GM12878 (cell line): ENCODE measurements at regions of chr17 and their contacts with region 1.

Region 1: DNA sequence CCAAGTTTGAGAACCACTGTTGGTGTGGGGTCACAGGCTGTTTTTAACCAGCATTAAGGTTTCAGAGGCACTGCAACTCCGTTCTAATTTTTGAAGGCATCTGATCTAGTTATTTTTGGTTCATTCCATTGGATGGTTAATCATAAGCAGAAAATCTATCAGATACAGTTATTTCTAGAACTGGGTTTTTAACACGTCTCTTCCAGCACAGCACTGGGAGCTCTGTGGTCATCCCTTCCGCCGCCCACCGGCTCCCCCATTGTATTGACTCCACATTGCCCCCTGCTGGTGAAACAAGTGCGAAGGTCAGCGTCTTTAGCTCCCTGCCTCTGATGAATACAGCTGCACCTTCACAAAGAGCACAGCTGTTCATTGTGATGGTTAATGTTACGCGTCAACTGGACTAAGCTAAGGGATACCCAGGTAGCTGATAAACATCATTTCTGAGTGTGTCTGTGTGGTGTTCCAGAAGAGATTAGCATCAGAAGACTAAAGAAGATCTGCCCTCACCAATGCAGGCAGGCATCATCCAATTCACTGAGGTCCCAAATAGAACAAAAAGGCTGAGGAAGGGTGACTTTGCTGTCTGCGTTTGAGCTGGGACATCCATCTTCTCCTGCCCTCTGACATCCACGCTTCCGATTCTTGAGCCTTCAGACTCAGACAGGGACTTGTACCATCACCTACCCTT is 8.5 kb downstream of the CCL18 start:
- DNase-seq: peak; percentile 69
- ATAC-seq: peak; percentile 90
- H3K4me3 ChIP-seq: no peak overlapping the region
- H3K27ac ChIP-seq: no peak overlapping the region
- H3K4me1 ChIP-seq: peaks cover 11% of the 10 kb centered on the region
- H3K27me3 ChIP-seq: no peaks in the 10 kb centered on the region
- CTCF ChIP-seq: peak; percentile 69 to 82 (median 81)
- EP300 ChIP-seq: peak; percentile 82 to 94; a peak in 3 of 4 replicates
- POLR2A ChIP-seq: no peak
- RAD21 ChIP-seq: peak; percentile 73

Region 2: GRCh38 chr17:35460354-35460851 is 612.2 kb before region 1 on chr17:
- CTCF ChIA-PET with region 1: no interaction called
- POLR2A ChIA-PET with region 1: no interaction called
- RAD21 ChIA-PET with region 1: no interaction called
- SMC1A ChIA-PET with region 1: no interaction called
- in situ Hi-C with region 1: no loop called
- intact Hi-C with region 1: no loop called
- DNase-seq: peak; percentile 39
- ATAC-seq: peak; percentile 98
- H3K4me3 ChIP-seq: peak overlapping the region; percentile 54; the same call in 1 of the 2 replicates
- H3K27ac ChIP-seq: peak overlapping the region; percentile 24; the same call in 1 of the 2 replicates
- H3K4me1 ChIP-seq: no peaks in the 10 kb centered on the region
- H3K27me3 ChIP-seq: no peaks in the 10 kb centered on the region
- CTCF ChIP-seq: no peak
- EP300 ChIP-seq: no peak
- POLR2A ChIP-seq: peak; percentile 64
- RAD21 ChIP-seq: no peak

Region 3: GRCh38 chr17:35969558-35970380 is 102.8 kb before region 1 on chr17:
- CTCF ChIA-PET with region 1: interaction called, 392 read pairs
- POLR2A ChIA-PET with region 1: interaction called, 3 read pairs
- RAD21 ChIA-PET with region 1: interaction called, 89 read pairs
- SMC1A ChIA-PET with region 1: interaction called, 341 read pairs
- in situ Hi-C with region 1: loop called (anchors 5 kb)
- intact Hi-C with region 1: no loop called
- DNase-seq: peak; percentile 45
- ATAC-seq: peak; percentile 92
- H3K4me3 ChIP-seq: no peak overlapping the region
- H3K27ac ChIP-seq: no peak overlapping the region
- H3K4me1 ChIP-seq: no peaks in the 10 kb centered on the region
- H3K27me3 ChIP-seq: no peaks in the 10 kb centered on the region
- CTCF ChIP-seq: peak; percentile 77 to 92 (median 86); a peak in 5 of 6 replicates
- EP300 ChIP-seq: no peak
- POLR2A ChIP-seq: no peak
- RAD21 ChIP-seq: peak; percentile 95

Region 4: GRCh38 chr17:36008998-36009665 is 63.4 kb before region 1 on chr17:
- CTCF ChIA-PET with region 1: interaction called, 16 read pairs
- POLR2A ChIA-PET with region 1: no interaction called
- RAD21 ChIA-PET with region 1: interaction called, 3 read pairs
- SMC1A ChIA-PET with region 1: interaction called, 13 read pairs
- in situ Hi-C with region 1: no loop called
- intact Hi-C with region 1: no loop called
- DNase-seq: no peak
- ATAC-seq: peak; percentile 77
- H3K4me3 ChIP-seq: no peak overlapping the region; the same call in 1 of the 2 replicates
- H3K27ac ChIP-seq: no peak overlapping the region
- H3K4me1 ChIP-seq: no peaks in the 10 kb centered on the region
- H3K27me3 ChIP-seq: no peaks in the 10 kb centered on the region
- CTCF ChIP-seq: peak; percentile 4 to 51 (median 47); a peak in 4 of 6 replicates
- EP300 ChIP-seq: no peak
- POLR2A ChIP-seq: no peak
- RAD21 ChIP-seq: no peak

Region 5: GRCh38 chr17:36055171-36055570 is 17.4 kb before region 1 on chr17:
- CTCF ChIA-PET with region 1: interaction called, 10 read pairs
- POLR2A ChIA-PET with region 1: interaction called, 3 read pairs
- RAD21 ChIA-PET with region 1: interaction called, 4 read pairs
- SMC1A ChIA-PET with region 1: interaction called, 6 read pairs
- in situ Hi-C with region 1: no loop called
- intact Hi-C with region 1: no loop called
- DNase-seq: no peak
- ATAC-seq: no peak
- H3K4me3 ChIP-seq: no peak overlapping the region
- H3K27ac ChIP-seq: no peak overlapping the region
- H3K4me1 ChIP-seq: no peaks in the 10 kb centered on the region
- H3K27me3 ChIP-seq: no peaks in the 10 kb centered on the region
- CTCF ChIP-seq: no peak
- EP300 ChIP-seq: no peak
- POLR2A ChIP-seq: no peak
- RAD21 ChIP-seq: no peak

Region 6: GRCh38 chr17:36107660-36108059 is 35.1 kb after region 1 on chr17:
- CTCF ChIA-PET with region 1: interaction called, 25 read pairs
- POLR2A ChIA-PET with region 1: no interaction called
- RAD21 ChIA-PET with region 1: interaction called, 6 read pairs
- SMC1A ChIA-PET with region 1: interaction called, 17 read pairs
- in situ Hi-C with region 1: no loop called
- intact Hi-C with region 1: no loop called
- DNase-seq: no peak
- ATAC-seq: no peak
- H3K4me3 ChIP-seq: no peak overlapping the region
- H3K27ac ChIP-seq: no peak overlapping the region
- H3K4me1 ChIP-seq: peaks cover 13% of the 10 kb centered on the region
- H3K27me3 ChIP-seq: no peaks in the 10 kb centered on the region
- CTCF ChIP-seq: no peak
- EP300 ChIP-seq: no peak
- POLR2A ChIP-seq: no peak
- RAD21 ChIP-seq: no peak

Region 7: DNA sequence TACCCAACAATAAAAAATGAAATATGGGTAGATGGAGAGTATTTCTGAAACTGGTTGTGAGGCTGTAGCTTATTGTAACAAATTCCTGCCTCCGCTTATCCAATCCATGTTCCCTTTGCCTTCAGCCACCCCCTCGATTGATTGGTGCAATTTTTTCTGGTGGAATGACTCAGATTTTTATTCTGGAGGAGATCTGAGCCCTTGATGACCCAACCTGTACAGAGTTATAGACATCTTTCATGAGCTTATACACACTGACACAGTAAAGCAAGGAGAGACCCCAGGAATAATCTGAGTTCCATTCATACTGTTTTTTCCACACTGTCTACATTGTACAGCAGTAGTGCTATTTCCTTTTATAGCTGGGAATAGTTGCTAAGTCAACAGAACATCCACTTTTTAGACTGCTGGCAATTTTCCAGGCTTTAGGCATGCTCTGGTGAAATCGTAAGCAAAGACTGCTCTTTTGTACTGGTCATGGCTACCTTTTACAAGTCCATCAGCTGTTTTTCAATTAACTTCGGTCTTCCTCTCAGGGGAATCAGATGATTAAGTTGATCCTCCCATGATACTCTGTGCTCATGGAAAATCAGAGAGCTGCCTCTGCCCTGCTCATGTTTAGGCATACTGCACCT is 61.1 kb after region 1 on chr17:
- CTCF ChIA-PET with region 1: interaction called, 24 read pairs
- POLR2A ChIA-PET with region 1: interaction called, 3 read pairs
- RAD21 ChIA-PET with region 1: interaction called, 13 read pairs
- SMC1A ChIA-PET with region 1: interaction called, 26 read pairs
- in situ Hi-C with region 1: no loop called
- intact Hi-C with region 1: no loop called
- DNase-seq: no peak
- ATAC-seq: no peak
- H3K4me3 ChIP-seq: no peak overlapping the region
- H3K27ac ChIP-seq: no peak overlapping the region
- H3K4me1 ChIP-seq: peaks cover 29% of the 10 kb centered on the region
- H3K27me3 ChIP-seq: no peaks in the 10 kb centered on the region
- CTCF ChIP-seq: no peak
- EP300 ChIP-seq: no peak
- POLR2A ChIP-seq: no peak
- RAD21 ChIP-seq: no peak